ENCODE measurements at regions of chr15 and their contacts with region 1.

Region 1: DNA sequence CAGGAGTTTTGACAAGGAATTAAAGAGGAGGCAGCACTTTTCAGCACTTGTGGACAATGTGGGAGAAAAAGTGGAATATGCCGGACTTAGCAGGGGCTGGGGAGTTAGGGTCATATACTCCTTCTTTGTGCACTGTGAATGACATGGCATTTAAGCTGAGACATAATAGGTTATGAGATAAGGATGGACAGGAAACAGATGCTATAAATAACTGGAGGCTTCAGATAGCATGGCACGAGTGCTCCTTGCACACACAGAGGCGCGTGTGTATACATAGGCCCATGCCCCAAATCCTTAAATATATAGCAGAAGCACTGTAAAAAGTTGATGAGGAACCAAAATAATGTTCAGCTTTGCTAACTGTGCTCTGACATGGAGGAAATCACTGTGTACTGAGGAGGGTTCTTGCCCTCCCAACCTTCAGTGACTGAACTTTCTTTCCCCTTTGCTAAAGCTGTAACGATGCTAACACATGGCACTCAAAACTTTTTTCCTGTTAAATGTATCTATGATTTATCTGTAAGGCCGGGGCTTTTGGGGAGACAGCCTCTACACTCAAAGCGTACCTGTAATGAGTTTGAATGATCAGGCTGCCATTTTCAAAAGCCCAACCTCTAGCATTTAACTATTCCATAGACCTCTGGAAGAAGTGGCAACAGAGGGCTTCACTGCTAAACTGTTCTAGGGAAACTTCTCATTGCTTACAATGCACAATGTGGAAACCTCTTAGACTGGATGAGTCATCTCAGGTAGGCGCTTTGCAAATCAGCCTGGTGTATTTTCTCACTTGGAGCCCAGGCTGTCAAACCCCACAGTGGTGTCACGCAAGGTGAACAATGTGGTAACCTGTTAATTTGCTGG is 784.6 kb downstream of the NR2F2 start:
- DNase-seq: no peak
- ATAC-seq: peak in 6 of 8 donors; percentile 34 to 89 (median 80)
- H3K4me3 ChIP-seq: no peak overlapping the region
- H3K27ac ChIP-seq: no peak overlapping the region
- H3K4me1 ChIP-seq: peaks cover 0 to 4% (median 0%) of the 10 kb centered on the region in 9 donors
- H3K27me3 ChIP-seq: no peaks in the 10 kb centered on the region
- CTCF ChIP-seq: no peak

Region 2: DNA sequence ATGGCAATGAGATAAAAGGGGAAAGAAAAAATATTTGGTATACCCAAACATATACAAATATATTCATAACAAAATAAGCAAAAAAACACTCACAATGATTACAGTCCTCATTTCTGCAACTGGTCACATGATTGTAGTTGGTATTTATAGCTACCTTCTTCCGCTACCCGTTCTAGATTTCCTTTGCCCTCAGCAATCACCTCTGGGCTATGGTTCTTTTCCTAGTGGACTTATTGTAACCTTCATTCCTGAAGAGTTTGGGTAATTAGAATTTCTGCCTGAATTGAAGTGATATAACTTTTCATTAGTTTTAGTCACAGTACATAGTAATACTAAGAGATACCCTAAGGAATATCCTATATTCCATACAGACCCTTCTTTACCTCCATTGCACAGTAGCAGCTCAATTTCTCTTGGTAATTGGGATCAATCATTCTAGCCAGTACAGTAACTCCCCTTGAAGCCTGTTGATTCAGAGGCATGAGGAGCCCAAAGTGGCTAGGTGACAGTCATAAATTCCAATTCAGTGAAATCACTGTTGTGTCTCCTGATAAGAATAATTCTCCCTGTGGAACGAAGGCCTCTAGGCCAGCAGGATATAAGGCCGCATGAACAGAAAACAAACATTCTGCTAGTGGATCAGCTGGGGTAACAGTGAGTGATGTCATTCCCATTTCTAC is 88.6 kb before region 1 on chr15:
- intact Hi-C with region 1: no loop called
- DNase-seq: no peak
- ATAC-seq: no peak
- H3K4me3 ChIP-seq: no peak overlapping the region
- H3K27ac ChIP-seq: no peak overlapping the region
- H3K4me1 ChIP-seq: no peaks in the 10 kb centered on the region
- H3K27me3 ChIP-seq: no peaks in the 10 kb centered on the region
- CTCF ChIP-seq: no peak

Region 3: DNA sequence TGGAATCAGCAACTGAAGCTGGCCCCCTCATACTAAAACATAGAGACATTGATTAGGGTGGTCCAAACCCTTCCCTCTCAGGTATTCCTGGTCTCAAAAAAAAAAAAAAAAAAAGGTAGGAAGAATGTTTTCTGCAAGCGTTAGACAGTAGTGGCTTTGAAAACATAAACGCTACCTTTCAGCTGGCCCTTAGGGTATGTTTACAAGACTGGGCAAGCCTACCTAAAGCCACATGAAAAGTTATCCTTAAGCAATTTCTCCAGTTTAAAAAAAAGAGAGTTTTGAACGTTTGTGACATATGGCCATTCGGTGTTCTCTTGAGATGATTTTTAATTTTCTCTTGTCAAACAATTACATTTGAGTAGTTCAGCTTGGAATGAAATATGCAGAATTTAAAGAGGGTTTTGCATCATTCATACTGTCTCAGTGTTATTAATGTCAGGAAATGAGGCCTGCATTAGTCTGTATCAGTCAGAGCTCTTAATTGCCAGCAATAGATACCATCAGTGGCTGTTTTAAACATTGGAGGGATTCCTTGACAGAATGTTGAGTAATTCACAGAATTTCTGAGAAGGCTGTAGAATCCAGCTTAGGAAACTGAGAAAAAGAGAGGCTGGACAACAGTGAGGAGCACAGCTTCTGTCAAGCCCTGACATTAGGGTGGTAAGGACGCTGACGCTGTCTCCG is 62.7 kb before region 1 on chr15:
- intact Hi-C with region 1: loop called in 1 of 10 experiments (anchors 10 kb)
- DNase-seq: no peak
- ATAC-seq: no peak
- H3K4me3 ChIP-seq: no peak overlapping the region
- H3K27ac ChIP-seq: no peak overlapping the region
- H3K4me1 ChIP-seq: no peaks in the 10 kb centered on the region
- H3K27me3 ChIP-seq: no peaks in the 10 kb centered on the region
- CTCF ChIP-seq: no peak

Region 4: GRCh38 chr15:97082830-97083229 is 32.3 kb before region 1 on chr15:
- intact Hi-C with region 1: no loop called
- DNase-seq: no peak
- ATAC-seq: no peak
- H3K4me3 ChIP-seq: no peak overlapping the region
- H3K27ac ChIP-seq: no peak overlapping the region
- H3K4me1 ChIP-seq: no peaks in the 10 kb centered on the region
- H3K27me3 ChIP-seq: peaks cover 0 to 21% (median 12%) of the 10 kb centered on the region in 7 donors
- CTCF ChIP-seq: no peak

Measured in heart right ventricle (tissue), 16 donors.